ENCODE measurements at regions of chr17 and their contacts with region 1.

Region 1: GRCh38 chr17:1648963-1649843 is 463 bp downstream of the RILP start:
- DNase-seq: peak; percentile 88 to 97
- ATAC-seq: peak; percentile 61 to 74
- H3K4me3 ChIP-seq: peak overlapping the region; percentile 54
- H3K27ac ChIP-seq: peak overlapping the region; percentile 85 to 89
- H3K4me1 ChIP-seq: peaks cover 30% of the 10 kb centered on the region
- CTCF ChIP-seq: peak; percentile 99
- EP300 ChIP-seq: no peak
- POLR2A ChIP-seq: peak; percentile 85
- RAD21 ChIP-seq: peak; percentile 65 to 86

Region 2: DNA sequence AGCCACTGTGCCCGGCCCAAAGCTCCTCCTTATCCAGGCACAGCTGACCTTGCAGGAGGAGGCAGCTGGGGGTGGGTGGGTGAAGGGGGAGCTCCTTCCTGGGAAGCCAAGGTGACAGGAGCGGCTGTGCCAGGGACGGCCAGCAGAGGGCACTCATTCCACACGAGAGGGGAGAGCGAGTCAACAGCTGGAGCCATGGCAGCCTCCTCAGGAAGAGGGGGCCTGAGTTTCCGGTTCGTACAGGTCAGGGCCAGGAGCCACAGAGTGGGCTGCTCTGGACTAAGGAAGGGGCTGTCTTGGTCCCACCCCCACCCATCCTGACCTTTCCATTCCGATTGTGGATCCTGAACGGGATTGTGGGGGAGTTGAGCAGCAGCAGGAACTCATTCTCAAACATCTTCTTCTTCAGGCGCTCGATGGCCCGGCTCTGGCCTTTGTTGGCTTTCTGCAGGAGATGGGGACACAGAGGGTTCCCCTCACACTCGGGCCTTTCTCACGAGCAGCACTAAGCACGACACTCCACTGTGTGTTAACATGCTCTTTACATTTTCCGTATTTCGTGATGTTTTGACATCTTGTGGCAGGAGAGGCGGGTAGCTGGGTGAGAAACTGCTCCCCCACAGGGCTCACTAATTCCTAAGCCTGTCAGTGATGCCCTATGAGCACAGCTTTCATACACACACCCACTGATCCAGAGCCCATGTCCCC is 590.6 kb before region 1 on chr17:
- CTCF ChIA-PET with region 1: no interaction called
- POLR2A ChIA-PET with region 1: no interaction called
- DNase-seq: peak; percentile 73 to 76
- ATAC-seq: peak; percentile 58 to 73
- H3K4me3 ChIP-seq: no peak overlapping the region
- H3K27ac ChIP-seq: peak overlapping the region in 1 of 2 experiments; percentile 19; a peak in 1 of 6 replicates
- H3K4me1 ChIP-seq: peaks cover 11% of the 10 kb centered on the region
- CTCF ChIP-seq: peak; percentile 88
- EP300 ChIP-seq: no peak
- POLR2A ChIP-seq: no peak
- RAD21 ChIP-seq: peak; percentile 88 to 89

Region 3: GRCh38 chr17:1561400-1562175 is 87.6 kb before region 1 on chr17:
- CTCF ChIA-PET with region 1: interaction called, 12 read pairs
- POLR2A ChIA-PET with region 1: no interaction called
- DNase-seq: peak in 1 of 2 experiments; percentile 63
- ATAC-seq: peak; percentile 52 to 58
- H3K4me3 ChIP-seq: peak overlapping the region; percentile 91
- H3K27ac ChIP-seq: peak overlapping the region; percentile 94 to 97
- H3K4me1 ChIP-seq: peaks cover 16% of the 10 kb centered on the region; the same call in 2 of the 3 replicates
- CTCF ChIP-seq: peak; percentile 20; the same call in 1 of the 3 replicates
- EP300 ChIP-seq: no peak
- POLR2A ChIP-seq: no peak
- RAD21 ChIP-seq: 0 out of 5 replicates have a peak, but pooled peaks of 1 of the 2 experiments have one; percentile 13

Region 4: GRCh38 chr17:1590031-1590748 is 59.0 kb before region 1 on chr17:
- CTCF ChIA-PET with region 1: interaction called, 37 read pairs
- POLR2A ChIA-PET with region 1: interaction called, 3 read pairs
- DNase-seq: peak; percentile 90 to 99
- ATAC-seq: peak; percentile 88 to 93
- H3K4me3 ChIP-seq: peak overlapping the region; percentile 22; the same call in 1 of the 3 replicates
- H3K27ac ChIP-seq: peak overlapping the region; percentile 76 to 84
- H3K4me1 ChIP-seq: peaks cover 42% of the 10 kb centered on the region
- CTCF ChIP-seq: no peak
- EP300 ChIP-seq: no peak
- POLR2A ChIP-seq: no peak
- RAD21 ChIP-seq: no peak; a peak in 2 of 5 replicates

Region 5: DNA sequence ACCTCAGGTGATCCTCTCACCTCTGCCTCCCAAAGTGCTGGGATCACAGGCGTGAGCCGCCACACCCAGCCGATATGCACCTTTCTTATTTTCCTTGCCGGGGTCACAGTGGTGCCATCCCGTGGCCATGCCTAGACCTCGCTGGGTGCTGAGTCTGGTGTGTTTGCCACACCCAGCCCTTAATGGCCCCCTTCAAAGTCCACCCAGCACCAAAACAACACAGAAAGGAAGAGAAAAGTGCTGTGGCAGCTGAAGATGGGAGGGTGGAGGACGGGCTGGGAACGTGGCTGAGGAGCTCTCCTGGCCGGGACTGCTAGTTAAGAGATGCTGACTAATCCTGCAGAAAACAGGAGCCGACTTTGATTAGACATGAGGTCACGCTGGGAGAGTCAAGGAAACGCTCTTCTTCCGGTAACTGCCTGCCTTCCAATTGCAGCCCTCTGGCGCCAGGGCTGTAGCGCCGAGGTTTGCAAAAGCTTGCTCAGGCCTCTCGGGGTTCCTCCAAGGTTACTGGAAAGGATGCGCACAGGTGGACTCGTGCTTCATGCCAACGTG is 31.5 kb before region 1 on chr17:
- CTCF ChIA-PET with region 1: interaction called, 21 read pairs
- POLR2A ChIA-PET with region 1: interaction called, 3 read pairs
- DNase-seq: peak; percentile 80 to 88
- ATAC-seq: peak; percentile 86 to 88
- H3K4me3 ChIP-seq: no peak overlapping the region
- H3K27ac ChIP-seq: peak overlapping the region; percentile 83 to 84
- H3K4me1 ChIP-seq: peaks cover 17% of the 10 kb centered on the region
- CTCF ChIP-seq: peak; percentile 48
- EP300 ChIP-seq: no peak
- POLR2A ChIP-seq: no peak
- RAD21 ChIP-seq: peak; percentile 46 to 48; a peak in 4 of 5 replicates

Region 6: DNA sequence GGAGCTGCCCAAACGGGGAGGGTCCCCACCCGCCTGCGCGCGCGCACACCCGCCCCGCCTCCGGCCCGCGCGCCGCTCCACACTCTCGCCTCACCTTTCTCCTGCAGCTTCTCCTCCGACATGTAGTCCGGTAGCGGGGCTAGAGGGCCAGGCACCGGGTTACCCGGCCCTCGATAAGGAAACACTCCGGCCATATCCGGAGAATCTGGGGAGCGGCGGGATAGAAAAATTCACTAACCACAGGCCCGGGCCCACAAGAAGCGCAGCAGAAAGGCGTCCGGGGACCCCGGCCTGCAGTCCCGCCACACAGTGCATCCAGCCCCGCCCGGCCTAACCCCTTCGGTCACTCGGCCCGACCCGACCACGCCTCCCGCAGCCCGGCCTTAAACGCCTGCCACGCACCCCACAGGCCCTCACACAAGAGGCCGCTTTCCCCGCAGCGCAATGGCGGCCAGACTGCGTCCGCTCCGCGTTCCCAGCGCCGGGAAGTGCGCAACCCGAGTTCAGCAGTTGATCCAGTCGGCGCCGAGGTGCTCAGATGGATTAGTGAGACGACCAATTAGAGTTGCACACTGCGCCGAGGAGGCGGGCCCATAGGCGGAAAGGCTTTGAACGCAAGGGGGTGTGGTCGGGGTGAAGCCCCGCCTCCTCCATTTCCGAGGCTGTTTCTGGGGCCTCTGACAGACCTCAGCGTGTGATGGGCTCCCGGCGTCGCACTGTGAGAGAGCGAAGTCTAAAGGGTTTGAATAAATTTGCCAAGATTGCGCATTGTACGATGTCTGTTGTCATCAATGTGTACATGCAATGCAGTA is 35.4 kb after region 1 on chr17 and contains the start of gene PRPF8:
- CTCF ChIA-PET with region 1: interaction called, 47 read pairs
- POLR2A ChIA-PET with region 1: interaction called, 6 read pairs
- DNase-seq: peak; percentile 99
- ATAC-seq: peak; percentile 99
- H3K4me3 ChIP-seq: peak within 1 kb of the TSS; percentile 85
- H3K27ac ChIP-seq: peak within 1 kb of the TSS; percentile 95
- H3K4me1 ChIP-seq: peaks cover 7% of the 10 kb centered on the region
- CTCF ChIP-seq: no peak
- EP300 ChIP-seq: peak in 1 of 2 experiments; percentile 13; a peak in 1 of 5 replicates
- POLR2A ChIP-seq: peak; percentile 80
- RAD21 ChIP-seq: no peak
- polyA plus RNA-seq, gene PRPF8: 263 and 374 TPM in 2 replicates